Common myeloid progenitor, CD34-positive (primary cell): ENCODE measurements at regions of chr17 and their contacts with region 1.

Region 1: GRCh38 chr17:48767263-48767774 is 38.8 kb upstream of the HOXB13 start:
- DNase-seq: no peak
- H3K4me3 ChIP-seq: no peak overlapping the region
- H3K27ac ChIP-seq: no peak overlapping the region
- H3K4me1 ChIP-seq: peaks cover 0 to 7% (median 0%) of the 10 kb centered on the region in 4 experiments
- H3K27me3 ChIP-seq: peaks cover 0 to 26% (median 9%) of the 10 kb centered on the region in 5 experiments

Region 2: GRCh38 chr17:48738803-48739526 is 28.4 kb before region 1 on chr17:
- CTCF ChIA-PET with region 1: interaction called, 10 read pairs
- POLR2A ChIA-PET with region 1: no interaction called
- DNase-seq: peak in 1 of 3 donors; percentile 36
- H3K4me3 ChIP-seq: no peak overlapping the region
- H3K27ac ChIP-seq: no peak overlapping the region
- H3K4me1 ChIP-seq: no peaks in the 10 kb centered on the region
- H3K27me3 ChIP-seq: peaks cover 41 to 100% (median 65%) of the 10 kb centered on the region in 5 experiments

Region 3: DNA sequence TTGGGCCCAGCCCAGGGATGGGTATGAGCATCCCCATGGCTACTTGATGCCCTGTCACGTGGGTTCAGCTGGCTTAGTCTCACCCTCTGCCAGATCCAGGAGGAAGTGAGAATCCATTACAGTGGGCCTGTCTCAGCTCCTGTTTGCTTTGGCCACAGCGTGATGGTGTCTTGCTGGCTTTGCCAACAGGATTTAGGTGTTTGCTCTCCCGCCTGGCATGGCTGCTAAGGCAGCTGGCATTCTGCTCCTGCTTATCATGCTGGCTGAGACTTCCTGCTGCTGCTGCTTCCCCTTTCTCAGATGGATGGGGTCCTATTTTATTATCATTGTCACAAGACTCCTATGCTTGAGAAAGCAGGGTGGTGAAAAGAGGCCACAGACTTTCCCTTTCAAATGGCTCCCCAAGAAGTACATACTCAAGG is 10.5 kb before region 1 on chr17:
- CTCF ChIA-PET with region 1: interaction called, 12 read pairs
- POLR2A ChIA-PET with region 1: no interaction called
- DNase-seq: peak; percentile 68 to 83 (median 78)
- H3K4me3 ChIP-seq: no peak overlapping the region
- H3K27ac ChIP-seq: no peak overlapping the region
- H3K4me1 ChIP-seq: peaks cover 4 to 24% (median 22%) of the 10 kb centered on the region in 4 experiments
- H3K27me3 ChIP-seq: peaks cover 17 to 57% (median 37%) of the 10 kb centered on the region in 5 experiments